Activated CD4-positive, alpha-beta memory T cell treated with anti-CD3 and anti-CD28 coated beads, Interleukin-2, amount 10 ng/mL, durations not matched to agents 7 days and 5 days (primary cell): ENCODE measurements at regions of chr1 and their contacts with region 1.

Region 1: DNA sequence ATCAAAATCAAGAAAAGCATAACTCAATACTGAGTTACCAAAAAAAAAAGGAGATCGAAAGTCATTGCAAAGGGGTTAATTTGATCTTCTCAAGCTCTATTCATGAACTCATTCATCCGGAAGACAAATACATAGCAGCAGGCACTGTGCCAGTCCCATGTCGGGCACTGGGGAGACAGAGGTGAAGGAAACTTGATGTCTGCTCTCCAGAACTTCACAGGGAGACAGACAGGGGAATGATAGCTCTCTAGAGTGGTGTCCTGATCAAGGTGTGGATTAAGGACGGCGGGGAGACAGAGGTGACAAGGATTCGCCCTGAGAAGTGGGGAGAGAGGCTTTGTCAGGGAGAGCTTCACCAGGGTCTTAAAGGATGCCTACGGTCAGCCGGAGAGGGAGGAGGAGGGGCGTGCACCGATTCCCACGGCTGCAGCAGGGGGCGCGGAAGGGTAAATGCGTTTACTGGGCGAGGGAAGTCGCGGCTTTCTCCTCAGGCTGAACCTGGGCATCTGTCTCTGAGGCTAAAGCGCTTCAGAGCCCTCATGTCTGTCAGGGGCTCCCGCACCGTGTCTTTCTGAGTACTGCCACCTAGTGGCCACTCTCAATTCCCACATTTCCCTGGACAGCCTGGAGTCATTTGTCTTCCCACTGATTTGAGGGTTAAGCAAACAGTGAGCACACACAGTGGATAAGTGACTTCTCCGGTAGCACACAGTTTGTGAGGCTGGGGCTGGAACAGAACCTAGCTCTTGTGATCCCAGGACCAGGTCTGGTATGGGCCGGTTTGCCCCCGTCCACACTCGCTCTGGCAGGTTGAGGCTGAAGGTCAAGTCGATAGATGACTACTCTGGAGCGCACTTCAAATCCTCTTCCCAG is 152.8 kb downstream of the TENT5C start:
- DNase-seq: peak; percentile 73
- H3K4me3 Mint-ChIP-seq: peak overlapping the region; percentile 66
- H3K27ac Mint-ChIP-seq: no peak overlapping the region
- H3K4me1 Mint-ChIP-seq: peaks cover 17% of the 10 kb centered on the region
- H3K27me3 Mint-ChIP-seq: peaks cover 13% of the 10 kb centered on the region

Region 2: DNA sequence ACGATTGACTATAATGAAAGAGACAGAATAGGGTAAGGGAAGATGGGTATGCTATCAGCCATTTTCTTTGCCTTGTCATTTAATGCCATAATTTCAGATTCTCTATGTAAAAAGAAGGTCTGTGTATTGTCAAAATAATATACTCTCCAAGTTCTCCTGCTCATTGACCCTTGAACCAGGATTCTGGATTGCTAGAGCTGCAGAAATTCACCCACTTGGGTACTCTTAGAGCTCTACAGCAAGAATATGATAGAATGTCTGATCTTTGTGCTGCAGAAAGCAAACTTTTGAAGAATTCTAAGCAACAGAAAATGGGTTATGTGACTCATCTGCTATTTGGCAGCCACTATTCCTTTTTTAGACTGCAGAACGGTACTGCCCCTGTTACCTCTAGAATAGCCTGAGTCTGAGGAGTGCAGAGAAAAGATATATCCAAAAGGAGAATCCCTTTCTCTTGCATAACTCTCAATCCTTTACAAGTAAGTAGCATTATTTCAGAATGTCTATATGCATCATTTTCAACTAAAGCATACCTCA is 231.0 kb before region 1 on chr1:
- CTCF ChIA-PET with region 1: interaction called, 220 read pairs
- POLR2A ChIA-PET with region 1: no interaction called
- DNase-seq: no peak
- H3K4me3 Mint-ChIP-seq: no peak overlapping the region
- H3K27ac Mint-ChIP-seq: no peak overlapping the region
- H3K4me1 Mint-ChIP-seq: peaks cover 3% of the 10 kb centered on the region
- H3K27me3 Mint-ChIP-seq: no peaks in the 10 kb centered on the region

Region 3: GRCh38 chr1:117605774-117606648 is 152.7 kb before region 1 on chr1 and contains the start of gene TENT5C:
- CTCF ChIA-PET with region 1: interaction called, 17 read pairs
- POLR2A ChIA-PET with region 1: interaction called, 3 read pairs
- DNase-seq: peak; percentile 99
- H3K4me3 Mint-ChIP-seq: peak within 1 kb of the TSS; percentile 97
- H3K27ac Mint-ChIP-seq: peak within 1 kb of the TSS; percentile 95
- H3K4me1 Mint-ChIP-seq: peaks cover 46% of the 10 kb centered on the region
- H3K27me3 Mint-ChIP-seq: peaks cover 17% of the 10 kb centered on the region
- total RNA-seq, gene TENT5C: 64.5 to 66.1 TPM

Region 4: GRCh38 chr1:117674521-117675397 is 83.9 kb before region 1 on chr1:
- CTCF ChIA-PET with region 1: interaction called, 14 read pairs
- POLR2A ChIA-PET with region 1: no interaction called
- DNase-seq: peak; percentile 71
- H3K4me3 Mint-ChIP-seq: no peak overlapping the region
- H3K27ac Mint-ChIP-seq: no peak overlapping the region
- H3K4me1 Mint-ChIP-seq: peaks cover 31% of the 10 kb centered on the region
- H3K27me3 Mint-ChIP-seq: no peaks in the 10 kb centered on the region

Region 5: GRCh38 chr1:117740496-117740895 is 18.2 kb before region 1 on chr1:
- CTCF ChIA-PET with region 1: interaction called, 18 read pairs
- POLR2A ChIA-PET with region 1: interaction called, 3 read pairs
- DNase-seq: no peak
- H3K4me3 Mint-ChIP-seq: no peak overlapping the region
- H3K27ac Mint-ChIP-seq: no peak overlapping the region
- H3K4me1 Mint-ChIP-seq: peaks cover 1% of the 10 kb centered on the region
- H3K27me3 Mint-ChIP-seq: peaks cover 10% of the 10 kb centered on the region